K562 (cell line): ENCODE measurements at regions of chr16 and their contacts with region 1.

Region 1: GRCh38 chr16:46830902-46831647 is at the start of gene C16orf87:
- DNase-seq: peak; percentile 93 to 96 (median 94)
- ATAC-seq: peak; percentile 97
- H3K4me3 ChIP-seq: peak within 1 kb of the TSS; percentile 92
- H3K27ac ChIP-seq: peak within 1 kb of the TSS; percentile 74
- H3K4me1 ChIP-seq: peaks cover 4 to 13% of the 10 kb centered on the region in 2 experiments; a peak in 4 of 5 replicates
- H3K27me3 ChIP-seq: no peaks in the 10 kb centered on the region
- CTCF ChIP-seq: no peak
- EP300 ChIP-seq: no peak; the same call in 1 of the 2 replicates
- POLR2A ChIP-seq: peak; percentile 68
- RAD21 ChIP-seq: no peak
- polyA plus RNA-seq, gene C16orf87: 13.9 to 16.7 TPM

Region 2: GRCh38 chr16:46743238-46743719 is 87.8 kb before region 1 on chr16:
- CTCF ChIA-PET with region 1: no interaction called
- POLR2A ChIA-PET with region 1: interaction called, 4 read pairs
- in situ Hi-C with region 1: no loop called
- intact Hi-C with region 1: loop called (anchors 2 kb)
- DNase-seq: peak; percentile 76 to 85 (median 82)
- ATAC-seq: peak; percentile 76
- H3K4me3 ChIP-seq: peak overlapping the region; percentile 35
- H3K27ac ChIP-seq: peak overlapping the region; percentile 92
- H3K4me1 ChIP-seq: peaks cover 38 to 50% of the 10 kb centered on the region in 2 experiments
- H3K27me3 ChIP-seq: no peaks in the 10 kb centered on the region
- CTCF ChIP-seq: no peak
- EP300 ChIP-seq: no peak
- POLR2A ChIP-seq: peak; percentile 1; the same call in 1 of the 2 replicates
- RAD21 ChIP-seq: no peak

Region 3: GRCh38 chr16:47028767-47029377 is 197.8 kb after region 1 on chr16:
- CTCF ChIA-PET with region 1: no interaction called
- POLR2A ChIA-PET with region 1: no interaction called
- in situ Hi-C with region 1: no loop called
- intact Hi-C with region 1: no loop called
- DNase-seq: no peak
- ATAC-seq: no peak
- H3K4me3 ChIP-seq: no peak overlapping the region
- H3K27ac ChIP-seq: no peak overlapping the region
- H3K4me1 ChIP-seq: no peaks in the 10 kb centered on the region
- H3K27me3 ChIP-seq: peaks cover 11 to 32% of the 10 kb centered on the region in 2 experiments; a peak in 4 of 5 replicates
- CTCF ChIP-seq: no peak
- EP300 ChIP-seq: no peak
- POLR2A ChIP-seq: no peak
- RAD21 ChIP-seq: no peak